Ovary (tissue), 10 donors: ENCODE measurements at regions of chr7 and their contacts with region 1.

Region 1: GRCh38 chr7:46672861-46673260 is 751.8 kb upstream of the IGFBP3 start:
- DNase-seq: no peak
- H3K4me3 ChIP-seq: no peak overlapping the region
- H3K27ac ChIP-seq: no peak overlapping the region
- H3K4me1 ChIP-seq: no peaks in the 10 kb centered on the region
- H3K27me3 ChIP-seq: no peaks in the 10 kb centered on the region
- CTCF ChIP-seq: no peak
- EP300 ChIP-seq: no peak
- POLR2A ChIP-seq: no peak

Region 2: DNA sequence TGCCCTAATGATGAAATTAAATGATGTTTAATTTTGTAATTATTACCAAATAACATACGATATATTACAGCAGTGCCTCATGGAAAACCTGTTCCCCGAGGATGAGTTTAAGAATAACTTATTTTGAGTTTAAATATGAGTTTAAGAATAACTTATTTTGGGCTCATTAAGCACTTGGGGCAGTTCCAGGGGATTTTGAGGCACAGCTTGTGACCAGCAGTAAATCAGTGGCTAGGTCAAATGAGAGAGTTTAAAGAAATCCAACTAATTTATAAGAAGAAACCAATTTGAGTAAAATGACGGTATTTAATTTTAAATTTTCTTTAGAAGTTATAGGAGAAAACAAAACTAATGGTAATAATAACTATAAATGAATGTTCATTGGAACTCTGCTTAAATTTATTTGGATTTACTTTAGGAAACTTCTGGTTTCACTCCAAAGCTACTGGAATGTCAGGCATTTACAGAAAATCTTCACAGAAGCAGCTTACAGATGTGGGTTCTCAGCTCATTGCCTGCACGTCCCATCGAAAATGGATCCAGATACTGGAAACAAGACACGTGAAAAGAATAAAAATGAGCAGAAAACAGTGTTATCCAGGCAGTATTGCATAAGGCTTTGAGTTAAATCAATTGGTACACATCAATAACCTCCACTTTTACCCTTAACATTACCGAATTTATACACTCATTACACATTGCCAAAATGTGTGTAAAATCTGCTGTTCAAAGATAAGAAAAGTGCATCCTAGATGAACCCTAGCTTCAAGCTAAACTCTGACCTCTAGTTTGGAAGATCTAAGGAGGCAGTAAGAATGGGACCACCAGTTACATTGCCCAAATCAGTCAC is 32.8 kb after region 1 on chr7:
- intact Hi-C with region 1: loop called in 1 of 4 experiments (anchors 2 kb)
- DNase-seq: no peak
- H3K4me3 ChIP-seq: no peak overlapping the region
- H3K27ac ChIP-seq: no peak overlapping the region
- H3K4me1 ChIP-seq: peaks cover 2% of the 10 kb centered on the region
- H3K27me3 ChIP-seq: no peaks in the 10 kb centered on the region
- CTCF ChIP-seq: no peak
- EP300 ChIP-seq: no peak
- POLR2A ChIP-seq: no peak